ENCODE measurements at regions of chr1 and their contacts with region 1.

Region 1: DNA sequence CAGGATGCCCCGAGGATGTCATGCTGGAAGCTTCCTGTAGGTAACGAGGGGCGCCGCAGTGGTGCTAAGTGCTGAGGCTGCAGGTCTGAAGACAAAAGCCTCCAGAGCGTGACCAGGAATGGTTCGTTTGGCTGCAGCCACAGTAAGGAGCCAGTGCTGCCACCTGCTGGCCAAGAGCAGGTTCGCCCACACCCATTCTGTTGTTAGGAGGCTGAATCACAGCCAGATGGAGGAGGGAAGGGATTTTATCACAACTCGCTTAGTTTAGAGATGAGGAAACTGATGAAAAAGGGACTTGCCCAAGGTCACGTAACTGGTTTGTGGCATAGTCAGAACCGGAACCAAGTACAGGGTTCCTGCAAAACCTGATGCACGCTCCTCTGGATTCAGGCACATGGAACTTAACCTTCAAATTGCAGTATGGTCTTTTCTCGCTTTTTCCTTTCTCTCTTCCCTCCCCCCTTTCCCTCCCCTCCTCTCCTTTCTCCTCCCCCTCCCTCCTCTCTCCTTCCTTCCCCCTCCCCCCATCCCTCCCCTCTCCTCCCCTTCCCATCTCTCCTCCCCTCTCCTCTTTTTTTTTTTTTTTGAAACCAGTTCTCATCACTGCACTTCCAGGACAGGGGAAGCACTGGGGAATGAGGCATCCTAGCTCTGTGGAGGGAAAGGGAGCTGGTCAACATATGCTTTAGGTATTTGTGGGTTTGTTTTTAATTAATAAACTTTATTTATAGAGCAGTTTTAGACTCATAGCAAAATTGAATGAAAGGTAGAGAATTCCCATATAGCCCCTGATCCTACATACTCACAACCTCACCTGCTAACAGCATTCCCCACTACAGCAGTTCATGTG is 81.8 kb downstream of the MPZL1 start:
- DNase-seq: peak; percentile 93 to 98
- H3K4me3 ChIP-seq: no peak overlapping the region
- CTCF ChIP-seq: peak in 1 of 3 donors; percentile 71
- POLR2A ChIP-seq: no peak

Region 2: DNA sequence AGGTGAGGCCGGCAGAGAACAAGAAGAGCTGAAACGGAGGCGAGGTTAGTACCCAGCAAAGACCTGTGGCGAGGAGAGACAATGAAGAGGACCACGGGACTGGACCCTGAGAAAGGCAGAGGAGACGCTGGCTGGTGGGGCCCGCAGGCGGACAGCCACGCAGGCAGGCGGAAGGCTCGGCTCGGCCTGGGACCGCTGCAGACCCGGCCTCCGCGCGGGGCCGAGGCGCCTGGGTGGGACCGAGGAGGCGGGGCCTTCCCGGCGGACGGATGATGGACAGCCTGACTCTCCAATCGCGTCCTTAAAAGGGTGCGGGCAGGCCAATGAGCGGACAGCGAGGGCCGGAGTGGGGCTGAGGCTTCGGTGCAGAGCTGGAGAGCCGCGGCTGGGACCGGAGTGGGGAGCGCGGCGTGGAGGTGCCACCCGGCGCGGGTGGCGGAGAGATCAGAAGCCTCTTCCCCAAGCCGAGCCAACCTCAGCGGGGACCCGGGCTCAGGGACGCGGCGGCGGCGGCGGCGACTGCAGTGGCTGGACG is 81.9 kb before region 1 on chr1 and contains the start of gene MPZL1:
- intact Hi-C with region 1: loop called (anchors 10 kb)
- DNase-seq: peak; percentile 95 to 99
- H3K4me3 ChIP-seq: peak within 1 kb of the TSS; percentile 88
- CTCF ChIP-seq: peak in 1 of 3 donors; percentile 11
- POLR2A ChIP-seq: no peak
- total RNA-seq, gene MPZL1: 24.9 to 54.6 (median 30.9) TPM

Region 3: DNA sequence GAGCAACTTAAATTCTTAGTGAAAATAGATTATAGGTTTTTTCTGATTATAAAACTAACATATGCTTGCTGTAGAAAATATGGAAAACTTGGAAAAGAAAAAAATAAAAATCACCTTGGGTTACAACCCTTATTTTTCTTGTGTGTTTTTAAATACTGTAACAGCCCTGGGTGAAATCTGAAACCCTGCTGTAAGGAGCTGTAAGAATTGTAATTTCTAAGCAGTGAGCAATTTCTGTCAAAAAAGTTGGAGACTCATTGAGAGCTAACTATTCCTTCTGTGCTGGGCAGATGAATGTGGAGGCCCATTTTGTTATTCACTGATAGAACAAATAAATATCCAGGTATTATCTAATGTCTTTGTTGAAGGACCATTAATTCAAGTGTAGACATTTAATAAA is 67.7 kb after region 1 on chr1:
- intact Hi-C with region 1: no loop called
- DNase-seq: no peak
- H3K4me3 ChIP-seq: no peak overlapping the region
- CTCF ChIP-seq: no peak
- POLR2A ChIP-seq: no peak

Measured in lower leg skin (tissue), 4 donors.